CD8-positive, alpha-beta T cell (primary cell): ENCODE measurements at regions of chr17 and their contacts with region 1.

Region 1: GRCh38 chr17:8288336-8289102 is at the start of gene RANGRF:
- DNase-seq: peak; percentile 38 to 89 (median 79)
- ATAC-seq: peak; percentile 94
- H3K4me3 ChIP-seq: peak within 1 kb of the TSS; percentile 73 to 82
- H3K4me3 Mint-ChIP-seq: peak within 1 kb of the TSS; percentile 97
- H3K27ac ChIP-seq: peak within 1 kb of the TSS; percentile 77 to 89
- H3K27ac Mint-ChIP-seq: peak within 1 kb of the TSS; percentile 97
- H3K4me1 ChIP-seq: peaks cover 17% of the 10 kb centered on the region
- H3K4me1 Mint-ChIP-seq: peaks cover 39% of the 10 kb centered on the region
- H3K27me3 ChIP-seq: no peaks in the 10 kb centered on the region
- H3K27me3 Mint-ChIP-seq: no peaks in the 10 kb centered on the region
- CTCF ChIP-seq: no peak
- total RNA-seq, gene RANGRF: 18.9 to 20.2 TPM

Region 2: DNA sequence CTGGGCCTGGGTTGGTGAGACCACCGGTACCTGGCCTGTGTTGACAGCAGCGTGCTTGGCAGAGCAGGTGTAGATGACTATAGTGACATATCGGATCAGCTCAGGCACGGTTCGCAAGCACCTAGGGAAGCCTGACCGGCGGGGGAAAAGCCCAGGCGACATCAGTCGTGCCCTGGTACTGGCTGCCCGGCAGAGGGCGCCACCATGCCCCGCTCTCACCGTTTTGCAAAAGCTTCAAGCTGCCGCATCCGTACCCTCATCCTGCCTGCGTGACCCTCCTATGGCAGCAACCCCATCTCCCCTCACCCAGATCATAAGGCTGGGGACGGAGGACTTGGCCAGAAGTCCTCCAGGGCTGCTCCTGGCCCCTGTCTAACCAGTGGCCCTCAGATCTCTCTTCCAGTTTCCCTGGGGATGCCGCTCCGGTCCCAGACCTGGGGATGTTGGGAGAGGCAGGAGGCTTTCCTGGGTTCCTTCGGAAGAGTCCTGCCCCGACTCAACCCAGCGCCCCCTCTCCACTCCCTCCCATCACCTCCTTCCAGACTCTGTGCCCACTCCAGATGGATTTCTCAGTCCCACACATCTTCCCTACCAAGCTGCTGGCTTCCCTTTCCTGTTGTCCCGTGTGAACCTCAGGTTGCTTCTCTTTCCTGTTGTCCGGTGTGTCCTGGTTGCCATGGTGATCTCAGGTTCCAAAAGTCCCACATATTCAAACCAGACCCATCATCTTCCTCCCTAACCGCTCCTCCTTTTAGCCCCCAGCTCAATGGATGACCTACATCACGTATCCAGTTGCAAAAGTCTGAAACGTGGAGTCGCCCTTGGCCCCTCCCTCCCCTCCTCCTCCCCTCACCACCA is 214.7 kb before region 1 on chr17:
- CTCF ChIA-PET with region 1: no interaction called
- POLR2A ChIA-PET with region 1: no interaction called
- intact Hi-C with region 1: loop called in 1 of 2 experiments (anchors 5 kb)
- DNase-seq: peak; percentile 74 to 93 (median 88)
- ATAC-seq: peak; percentile 96
- H3K4me3 ChIP-seq: peak overlapping the region in 1 of 2 experiments; percentile 45
- H3K4me3 Mint-ChIP-seq: peak overlapping the region; percentile 84
- H3K27ac ChIP-seq: no peak overlapping the region
- H3K27ac Mint-ChIP-seq: peak overlapping the region; percentile 37
- H3K4me1 ChIP-seq: peaks cover 22% of the 10 kb centered on the region
- H3K4me1 Mint-ChIP-seq: peaks cover 22% of the 10 kb centered on the region
- H3K27me3 ChIP-seq: peaks cover 11 to 22% of the 10 kb centered on the region in 2 experiments
- H3K27me3 Mint-ChIP-seq: peaks cover 36% of the 10 kb centered on the region
- CTCF ChIP-seq: peak; percentile 89

Region 3: DNA sequence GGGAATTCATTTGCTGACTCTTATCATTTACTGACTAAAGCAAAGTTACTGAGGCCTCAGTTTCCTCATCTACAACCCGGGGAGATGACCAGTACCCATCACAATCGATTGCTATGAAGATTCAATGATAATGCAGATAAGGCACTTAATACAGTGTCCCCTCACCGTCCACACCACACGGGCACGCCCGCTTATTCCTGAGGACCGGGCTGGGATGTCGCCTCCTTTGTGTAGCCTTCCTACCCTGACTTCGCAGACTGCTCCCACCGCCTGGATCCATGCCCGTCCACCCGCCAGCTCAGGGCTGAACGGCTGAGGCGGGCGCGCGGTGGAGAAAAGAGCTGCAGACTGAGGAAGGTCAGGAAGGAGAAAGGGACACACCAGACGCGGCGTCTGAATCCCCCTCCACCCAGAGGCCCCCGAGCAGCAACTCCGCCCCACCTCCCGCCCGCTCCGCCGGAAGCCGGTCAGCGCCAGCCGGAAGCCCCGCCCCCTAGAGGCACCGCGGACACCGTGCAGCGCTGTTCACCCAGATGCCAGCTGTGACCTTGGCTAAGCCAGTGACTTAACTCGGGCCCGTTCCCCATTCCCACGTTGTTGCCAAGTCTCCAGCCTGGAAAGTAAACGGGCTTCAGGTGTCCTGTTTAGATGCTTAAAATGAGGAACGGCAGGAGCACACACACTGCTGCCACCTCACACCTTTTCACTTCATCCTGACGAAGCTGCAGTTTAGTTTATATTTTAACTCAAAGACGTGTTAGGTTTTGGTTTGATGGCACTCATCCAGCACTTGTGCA is 88.0 kb after region 1 on chr17 and contains the start of gene KRABD2:
- CTCF ChIA-PET with region 1: no interaction called
- POLR2A ChIA-PET with region 1: no interaction called
- intact Hi-C with region 1: loop called in 1 of 2 experiments (anchors 5 kb)
- DNase-seq: peak; percentile 81 to 93 (median 92)
- ATAC-seq: peak; percentile 100
- H3K4me3 ChIP-seq: peak within 1 kb of the TSS; percentile 71 to 91
- H3K4me3 Mint-ChIP-seq: peak within 1 kb of the TSS; percentile 90
- H3K27ac ChIP-seq: peak within 1 kb of the TSS; percentile 63 to 64
- H3K27ac Mint-ChIP-seq: peak within 1 kb of the TSS; percentile 88
- H3K4me1 ChIP-seq: peaks cover 35% of the 10 kb centered on the region
- H3K4me1 Mint-ChIP-seq: peaks cover 49% of the 10 kb centered on the region
- H3K27me3 ChIP-seq: no peaks in the 10 kb centered on the region
- H3K27me3 Mint-ChIP-seq: no peaks in the 10 kb centered on the region
- CTCF ChIP-seq: peak; percentile 47

Region 4: DNA sequence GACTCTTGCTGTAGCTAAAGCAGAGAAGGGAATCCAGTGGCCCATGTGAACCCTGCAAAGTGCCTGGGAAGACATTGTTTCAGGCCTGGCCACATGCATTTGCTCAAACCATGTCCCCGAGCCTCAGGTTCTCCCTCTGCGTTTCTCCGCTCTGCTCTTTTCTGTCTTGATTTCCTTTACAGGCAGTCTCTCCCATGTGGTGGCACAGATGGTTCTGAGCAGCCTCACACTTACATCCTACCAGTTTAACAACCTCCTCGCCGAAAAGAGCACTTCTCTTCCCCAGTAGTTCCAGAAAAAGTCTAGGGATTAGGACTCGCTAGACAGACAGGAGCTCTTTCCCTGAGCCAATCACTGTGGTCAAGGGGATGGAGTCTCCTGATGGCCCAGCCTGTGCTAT is 370.3 kb after region 1 on chr17:
- CTCF ChIA-PET with region 1: no interaction called
- POLR2A ChIA-PET with region 1: no interaction called
- intact Hi-C with region 1: no loop called
- DNase-seq: no peak
- ATAC-seq: no peak
- H3K4me3 ChIP-seq: no peak overlapping the region
- H3K4me3 Mint-ChIP-seq: no peak overlapping the region
- H3K27ac ChIP-seq: no peak overlapping the region
- H3K27ac Mint-ChIP-seq: no peak overlapping the region
- H3K4me1 ChIP-seq: no peaks in the 10 kb centered on the region
- H3K4me1 Mint-ChIP-seq: no peaks in the 10 kb centered on the region
- H3K27me3 ChIP-seq: no peaks in the 10 kb centered on the region
- H3K27me3 Mint-ChIP-seq: peaks cover 24% of the 10 kb centered on the region
- CTCF ChIP-seq: no peak